ENCODE measurements at regions of chr11 and their contacts with region 1.

Region 1: DNA sequence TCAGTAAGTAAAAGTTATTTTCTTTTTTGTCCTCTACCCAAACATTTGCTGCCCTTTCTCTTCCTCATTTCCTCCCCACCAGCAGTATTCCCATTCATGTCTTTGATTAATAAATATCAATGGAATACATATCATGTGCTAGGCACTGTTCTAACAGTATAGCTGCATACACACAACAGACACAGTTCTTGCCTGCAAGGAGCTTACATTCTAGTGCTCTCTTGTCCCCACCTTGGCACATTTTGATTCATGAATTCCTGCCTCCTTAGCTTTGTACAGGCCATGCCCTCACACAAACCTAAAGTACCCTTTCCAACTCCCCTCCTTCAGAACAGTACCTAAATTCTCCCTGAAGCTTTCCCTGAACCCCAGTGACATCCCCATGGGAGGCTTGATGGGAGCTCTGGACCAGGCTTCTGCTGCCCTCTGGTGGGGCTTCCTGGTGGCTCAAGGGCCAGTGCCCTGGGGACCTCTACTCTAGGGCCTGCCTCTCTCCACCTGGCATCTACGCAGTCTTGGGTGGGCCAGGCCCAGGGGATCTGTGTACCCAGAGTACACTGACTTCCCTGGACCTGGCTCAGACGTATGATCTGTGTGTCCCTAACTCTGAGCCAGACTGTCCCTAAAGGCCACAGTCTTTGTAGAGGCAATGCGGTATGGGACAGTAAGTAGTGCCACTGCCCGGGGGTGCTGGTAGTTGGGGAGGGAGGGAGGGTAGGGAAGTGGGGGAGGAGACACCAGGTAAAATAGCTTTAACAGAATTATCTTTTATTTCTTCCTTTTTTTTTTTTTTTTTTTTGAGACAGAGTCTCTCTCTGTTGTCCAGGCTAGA is 14.1 kb downstream of the RPS13 start:
- DNase-seq: peak; percentile 27
- H3K4me3 Mint-ChIP-seq: no peak overlapping the region
- H3K27ac Mint-ChIP-seq: no peak overlapping the region
- H3K4me1 Mint-ChIP-seq: no peaks in the 10 kb centered on the region
- H3K27me3 Mint-ChIP-seq: peaks cover 2% of the 10 kb centered on the region

Region 2: GRCh38 chr11:16785520-16786128 is 277.8 kb before region 1 on chr11:
- intact Hi-C with region 1: loop called (anchors 1 kb)
- DNase-seq: peak; percentile 31
- H3K4me3 Mint-ChIP-seq: no peak overlapping the region
- H3K27ac Mint-ChIP-seq: no peak overlapping the region
- H3K4me1 Mint-ChIP-seq: no peaks in the 10 kb centered on the region
- H3K27me3 Mint-ChIP-seq: peaks cover 2% of the 10 kb centered on the region

Region 3: DNA sequence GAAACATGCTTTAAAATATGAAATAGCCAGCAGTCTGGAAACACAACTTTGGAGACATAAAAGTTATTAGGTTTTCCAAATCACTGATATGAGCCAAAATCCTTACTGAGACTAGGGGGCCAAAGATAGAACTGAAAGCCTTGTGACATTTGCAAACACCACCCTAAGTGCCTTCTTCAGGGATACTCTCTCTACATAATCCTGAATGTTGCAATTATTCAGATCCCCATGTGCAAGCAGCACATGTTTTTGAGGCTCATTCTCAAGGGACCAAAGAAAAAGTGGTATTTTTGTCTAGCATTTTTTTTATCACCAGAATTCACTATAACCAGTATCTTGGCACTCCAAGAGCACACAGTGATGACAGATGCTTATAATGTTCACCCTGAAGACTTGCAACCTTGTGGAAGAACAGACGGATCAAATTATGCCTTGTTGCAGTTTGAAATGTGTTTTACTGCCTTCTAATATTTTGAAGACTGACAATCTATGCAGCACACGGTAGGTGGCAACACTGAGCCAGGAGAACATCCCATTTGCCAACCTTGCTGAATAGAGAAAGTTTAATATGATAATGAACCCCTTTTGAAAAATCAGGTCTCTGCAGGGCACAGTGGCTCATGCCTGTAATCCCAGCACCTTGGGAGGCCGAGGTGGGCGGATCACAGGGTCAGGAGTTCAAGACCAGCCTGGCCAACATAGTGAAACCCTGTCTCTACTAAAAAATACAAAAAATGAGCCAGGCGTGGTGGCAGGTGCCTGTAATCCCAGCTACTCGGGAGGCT is 127.7 kb before region 1 on chr11:
- intact Hi-C with region 1: loop called (anchors 1 kb)
- DNase-seq: no peak
- H3K4me3 Mint-ChIP-seq: no peak overlapping the region
- H3K27ac Mint-ChIP-seq: no peak overlapping the region
- H3K4me1 Mint-ChIP-seq: no peaks in the 10 kb centered on the region
- H3K27me3 Mint-ChIP-seq: peaks cover 4% of the 10 kb centered on the region

Region 4: GRCh38 chr11:16945671-16946469 is 117.5 kb before region 1 on chr11:
- intact Hi-C with region 1: loop called (anchors 1 kb)
- DNase-seq: peak; percentile 14
- H3K4me3 Mint-ChIP-seq: no peak overlapping the region
- H3K27ac Mint-ChIP-seq: no peak overlapping the region
- H3K4me1 Mint-ChIP-seq: peaks cover 5% of the 10 kb centered on the region
- H3K27me3 Mint-ChIP-seq: no peaks in the 10 kb centered on the region

Region 5: DNA sequence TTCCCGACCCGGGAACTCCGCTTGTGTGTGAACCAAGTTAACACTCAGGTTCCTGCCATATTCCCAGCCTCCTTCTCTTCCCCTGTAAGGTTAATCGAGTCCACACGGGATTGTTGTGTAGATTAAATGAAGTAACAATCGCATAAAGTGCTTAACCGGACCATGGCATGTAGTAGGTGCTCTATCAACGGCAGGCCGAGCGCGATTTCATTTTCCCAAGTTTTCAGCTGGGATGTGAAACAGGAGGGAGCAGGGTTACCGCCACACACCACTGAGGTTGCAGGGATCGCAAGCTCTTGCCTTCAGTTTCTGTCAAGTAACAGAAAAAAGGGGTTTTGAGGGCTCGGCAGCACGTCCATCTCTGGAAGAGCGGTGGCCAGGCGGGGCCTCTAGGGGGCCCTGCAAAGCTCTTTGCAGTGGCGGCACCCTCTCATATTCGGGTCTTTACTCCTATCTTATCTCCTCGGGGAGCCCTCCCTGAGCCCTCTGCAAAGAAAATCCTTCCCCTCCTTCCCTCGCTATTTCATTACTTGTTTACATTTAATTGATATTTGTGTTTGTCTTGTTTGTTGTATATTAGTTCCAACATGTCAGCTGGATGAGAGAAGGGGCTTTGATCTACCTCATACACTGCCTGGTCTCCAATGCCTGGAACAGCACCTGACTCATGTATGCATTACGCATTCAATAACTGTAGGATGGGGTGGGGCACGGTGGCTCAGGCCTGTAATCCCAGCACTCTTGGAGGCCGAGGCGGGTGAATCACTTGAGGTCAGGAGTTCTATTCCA is 48.4 kb before region 1 on chr11:
- intact Hi-C with region 1: loop called (anchors 10 kb)
- DNase-seq: no peak
- H3K4me3 Mint-ChIP-seq: peak overlapping the region; percentile 85
- H3K27ac Mint-ChIP-seq: peak overlapping the region; percentile 34
- H3K4me1 Mint-ChIP-seq: peaks cover 4% of the 10 kb centered on the region
- H3K27me3 Mint-ChIP-seq: peaks cover 36% of the 10 kb centered on the region